HCT116 (cell line): ENCODE measurements at regions of chr1 and their contacts with region 1.

Region 1: DNA sequence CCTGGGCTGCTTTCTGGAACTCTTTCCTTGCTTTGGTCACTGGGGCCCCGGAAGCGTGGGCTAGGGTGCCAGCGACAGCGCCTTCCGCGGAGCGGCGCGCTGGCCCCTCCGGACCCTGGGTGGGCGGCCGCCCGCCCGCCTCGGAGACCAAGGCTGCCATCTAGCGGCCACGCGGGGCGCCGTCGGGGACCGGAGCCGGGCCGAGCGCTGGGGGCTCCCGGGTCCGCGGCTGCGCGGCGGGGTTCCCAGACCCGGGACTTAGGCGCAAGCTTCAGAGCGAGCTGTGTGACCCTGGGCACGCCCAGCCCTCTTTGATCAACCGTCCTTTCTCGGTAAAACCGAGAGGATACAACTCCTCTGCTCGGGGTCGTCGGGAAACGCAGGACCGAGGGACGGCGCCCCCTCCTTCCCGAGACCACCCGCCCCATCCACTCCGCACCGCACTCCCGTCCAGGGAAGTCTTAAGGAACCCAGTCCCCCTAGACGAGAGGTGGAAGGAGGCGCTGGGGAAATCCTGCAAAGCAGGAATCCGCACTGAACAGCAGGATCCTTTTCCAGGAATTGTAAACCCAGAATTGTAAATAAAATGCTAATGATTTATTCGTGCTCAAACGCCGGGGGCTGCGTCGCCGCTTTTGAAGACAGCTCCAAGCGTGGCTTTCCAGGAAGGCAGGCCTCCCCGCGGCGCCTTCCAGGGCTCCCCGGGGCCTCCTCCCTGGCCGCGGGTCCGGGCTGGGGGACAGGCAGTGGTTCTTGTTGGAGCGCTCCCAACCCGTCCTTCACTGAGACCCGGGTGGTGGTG is 41.2 kb downstream of the RRAGC start:
- DNase-seq: no peak
- ATAC-seq: peak; percentile 91
- H3K4me3 ChIP-seq: peak overlapping the region; percentile 22 to 30; a peak in 3 of 4 replicates
- H3K27ac ChIP-seq: no peak overlapping the region
- H3K4me1 ChIP-seq: peaks cover 0 to 5% of the 10 kb centered on the region in 2 experiments; a peak in 2 of 4 replicates
- H3K27me3 ChIP-seq: 0 out of 2 replicates have a peak, but pooled peaks cover 8% of the 10 kb centered on the region
- CTCF ChIP-seq: peak; percentile 45 to 84 (median 63); a peak in 5 of 6 replicates
- POLR2A ChIP-seq: no peak
- RAD21 ChIP-seq: peak; percentile 77

Region 2: GRCh38 chr1:38500352-38500751 is 318.0 kb before region 1 on chr1:
- CTCF ChIA-PET with region 1: no interaction called
- POLR2A ChIA-PET with region 1: no interaction called
- RAD21 ChIA-PET with region 1: no interaction called
- intact Hi-C with region 1: no loop called
- DNase-seq: no peak
- ATAC-seq: peak; percentile 77
- H3K4me3 ChIP-seq: no peak overlapping the region
- H3K27ac ChIP-seq: no peak overlapping the region
- H3K4me1 ChIP-seq: no peaks in the 10 kb centered on the region
- H3K27me3 ChIP-seq: peaks cover 64% of the 10 kb centered on the region
- CTCF ChIP-seq: peak in 2 of 3 experiments; percentile 67 to 69; a peak in 4 of 6 replicates
- POLR2A ChIP-seq: no peak
- RAD21 ChIP-seq: peak; percentile 34

Region 3: DNA sequence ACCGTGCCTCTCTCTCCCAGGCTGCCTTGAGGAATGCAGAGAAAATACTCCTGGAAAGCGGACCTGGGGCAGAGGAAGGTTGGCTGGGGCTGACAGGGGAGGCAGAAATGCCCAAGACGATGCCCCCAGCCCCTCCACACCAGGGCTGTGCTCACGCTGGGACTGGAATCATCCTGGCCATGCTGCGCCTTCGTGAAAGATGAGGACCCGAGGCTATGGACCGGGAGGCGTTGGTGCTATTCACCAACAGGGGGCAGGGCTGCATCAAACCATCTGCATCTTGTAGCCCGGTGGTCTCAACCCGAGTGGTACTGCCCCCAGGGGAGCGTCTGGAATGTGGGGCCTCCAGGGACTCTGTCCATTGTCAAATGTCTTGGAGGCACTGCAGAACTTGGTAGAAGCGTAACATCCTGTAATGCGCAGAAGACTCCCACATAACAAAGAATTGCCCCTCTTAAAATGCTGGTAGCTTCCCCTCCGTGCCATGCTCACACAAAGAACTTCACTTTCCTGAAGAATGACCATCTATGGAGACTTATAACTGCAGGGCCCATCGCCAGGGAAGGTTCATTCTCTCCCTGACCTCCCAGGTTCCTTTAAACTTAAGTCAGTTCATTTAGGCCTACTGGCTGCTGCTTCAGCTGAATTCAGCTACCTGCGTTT is 210.0 kb before region 1 on chr1:
- CTCF ChIA-PET with region 1: no interaction called
- POLR2A ChIA-PET with region 1: no interaction called
- RAD21 ChIA-PET with region 1: no interaction called
- intact Hi-C with region 1: loop called (anchors 5 kb)
- DNase-seq: peak; percentile 8
- ATAC-seq: peak; percentile 70
- H3K4me3 ChIP-seq: no peak overlapping the region
- H3K27ac ChIP-seq: no peak overlapping the region
- H3K4me1 ChIP-seq: peaks cover 0 to 11% of the 10 kb centered on the region in 2 experiments; a peak in 2 of 4 replicates
- H3K27me3 ChIP-seq: no peaks in the 10 kb centered on the region
- CTCF ChIP-seq: peak; percentile 19 to 60 (median 60); a peak in 4 of 6 replicates
- POLR2A ChIP-seq: no peak
- RAD21 ChIP-seq: peak; percentile 41